ENCODE measurements at regions of chr2 and their contacts with region 1.

Region 1: GRCh38 chr2:157194097-157194688 is 63.3 kb upstream of the GALNT5 start:
- DNase-seq: no peak
- ATAC-seq: peak in 2 of 4 donors; percentile 49 to 59
- H3K4me3 ChIP-seq: no peak overlapping the region
- H3K27ac ChIP-seq: no peak overlapping the region
- H3K4me1 ChIP-seq: peaks cover 0 to 7% (median 0%) of the 10 kb centered on the region in 12 donors
- H3K27me3 ChIP-seq: no peaks in the 10 kb centered on the region
- CTCF ChIP-seq: peak; percentile 42 to 77 (median 67)
- POLR2A ChIP-seq: no peak

Region 2: DNA sequence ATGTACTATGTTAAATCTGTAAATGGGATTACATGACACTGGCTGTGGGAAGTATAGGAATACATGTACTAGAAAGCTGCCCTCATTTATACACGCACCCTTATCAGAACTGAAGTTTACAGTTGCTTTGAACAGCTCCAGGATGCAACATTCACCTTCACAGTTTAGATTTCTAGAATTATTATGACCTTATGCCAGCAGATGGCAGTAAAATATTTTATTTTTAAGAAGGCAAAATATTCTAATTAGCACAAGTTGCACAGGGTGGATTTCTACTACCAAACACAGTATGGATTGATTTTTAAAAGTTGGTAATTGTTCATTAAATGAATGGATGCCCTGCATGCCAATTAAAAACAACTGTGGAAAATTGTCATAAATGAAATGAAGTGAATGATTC is 1825.3 kb before region 1 on chr2:
- intact Hi-C with region 1: loop called in 7 of 10 experiments (anchors 5 to 10 kb)
- DNase-seq: no peak
- ATAC-seq: no peak
- H3K4me3 ChIP-seq: no peak overlapping the region
- H3K27ac ChIP-seq: no peak overlapping the region
- H3K4me1 ChIP-seq: no peaks in the 10 kb centered on the region
- H3K27me3 ChIP-seq: peaks cover 0 to 6% (median 0%) of the 10 kb centered on the region in 9 donors
- CTCF ChIP-seq: peak in 5 of 12 donors; percentile 14 to 47 (median 21)
- POLR2A ChIP-seq: no peak

Region 3: GRCh38 chr2:155377266-155377680 is 1816.9 kb before region 1 on chr2:
- intact Hi-C with region 1: loop called in 6 of 10 experiments (anchors 5 to 10 kb)
- DNase-seq: no peak
- ATAC-seq: no peak
- H3K4me3 ChIP-seq: no peak overlapping the region
- H3K27ac ChIP-seq: no peak overlapping the region
- H3K4me1 ChIP-seq: no peaks in the 10 kb centered on the region
- H3K27me3 ChIP-seq: peaks cover 0 to 6% (median 0%) of the 10 kb centered on the region in 9 donors
- CTCF ChIP-seq: peak in 9 of 12 donors; percentile 14 to 48 (median 27)
- POLR2A ChIP-seq: no peak

Region 4: GRCh38 chr2:157124731-157125130 is 69.5 kb before region 1 on chr2:
- intact Hi-C with region 1: no loop called
- DNase-seq: no peak
- ATAC-seq: no peak
- H3K4me3 ChIP-seq: no peak overlapping the region
- H3K27ac ChIP-seq: no peak overlapping the region
- H3K4me1 ChIP-seq: no peaks in the 10 kb centered on the region
- H3K27me3 ChIP-seq: no peaks in the 10 kb centered on the region
- CTCF ChIP-seq: no peak
- POLR2A ChIP-seq: no peak